ENCODE measurements at regions of chr6 and their contacts with region 1.

Region 1: DNA sequence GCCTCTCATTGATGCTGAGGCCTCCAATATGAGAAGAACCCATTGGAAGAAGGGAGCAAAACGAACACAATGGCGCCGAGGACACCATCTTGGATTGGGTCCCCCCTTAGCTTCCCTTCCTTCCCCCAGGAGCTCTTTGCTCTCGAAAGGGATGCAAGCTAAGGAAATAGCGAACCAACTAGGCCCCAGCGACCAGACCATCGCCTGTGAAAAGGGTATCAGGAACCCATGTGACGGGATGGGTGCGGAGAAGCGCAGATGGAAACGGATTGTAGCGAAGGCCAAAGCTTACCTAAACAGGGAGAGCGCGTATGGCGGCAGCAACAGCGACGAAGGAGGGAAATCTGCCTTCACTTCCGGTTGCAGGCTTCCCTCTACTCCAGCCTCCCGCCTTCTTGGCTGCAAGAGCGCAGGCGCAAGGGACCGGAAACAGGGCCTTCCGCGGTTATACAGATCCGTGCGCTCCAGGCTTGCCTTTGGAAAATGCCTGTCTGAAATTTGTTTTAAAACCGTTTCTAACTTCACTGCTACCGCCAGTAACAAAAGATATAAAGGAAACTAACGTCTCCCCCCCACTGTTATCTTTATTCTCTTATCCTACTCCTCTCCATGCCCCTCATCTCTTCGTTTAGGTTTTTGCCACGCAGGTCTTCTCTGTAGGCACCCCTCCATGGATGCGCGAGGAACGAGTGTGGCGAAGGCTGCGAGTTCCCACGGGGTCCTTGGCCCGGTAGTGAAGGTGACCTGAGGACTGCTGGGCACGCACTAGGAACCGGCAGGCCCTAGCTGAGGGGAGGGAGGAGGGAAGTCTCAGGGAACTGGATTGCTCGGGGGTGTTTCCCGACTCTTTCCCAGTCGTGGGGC is at the start of gene DDX39B:
- DNase-seq: peak; percentile 95

Region 2: DNA sequence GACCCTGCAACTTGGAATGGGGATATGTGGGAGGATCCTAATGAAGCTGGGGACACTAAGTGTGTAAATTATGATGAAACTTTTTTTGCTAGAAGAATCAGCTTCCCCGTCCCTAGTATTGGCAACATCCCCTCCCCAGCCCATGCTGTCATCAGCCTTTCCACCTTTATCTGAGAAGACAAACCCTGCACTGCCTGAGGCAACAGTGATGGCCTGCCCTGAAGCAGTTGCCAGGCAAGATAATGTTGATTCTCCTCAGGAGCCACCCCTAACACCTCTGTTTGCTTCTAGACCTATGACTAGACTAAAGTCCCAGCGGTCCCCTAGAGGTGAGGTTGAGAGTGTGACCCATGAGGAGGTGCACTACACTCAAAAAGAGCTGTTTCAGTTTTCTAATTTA is 111.4 kb before region 1 on chr6:
- CTCF ChIA-PET with region 1: no interaction called
- POLR2A ChIA-PET with region 1: no interaction called
- DNase-seq: no peak

Region 3: DNA sequence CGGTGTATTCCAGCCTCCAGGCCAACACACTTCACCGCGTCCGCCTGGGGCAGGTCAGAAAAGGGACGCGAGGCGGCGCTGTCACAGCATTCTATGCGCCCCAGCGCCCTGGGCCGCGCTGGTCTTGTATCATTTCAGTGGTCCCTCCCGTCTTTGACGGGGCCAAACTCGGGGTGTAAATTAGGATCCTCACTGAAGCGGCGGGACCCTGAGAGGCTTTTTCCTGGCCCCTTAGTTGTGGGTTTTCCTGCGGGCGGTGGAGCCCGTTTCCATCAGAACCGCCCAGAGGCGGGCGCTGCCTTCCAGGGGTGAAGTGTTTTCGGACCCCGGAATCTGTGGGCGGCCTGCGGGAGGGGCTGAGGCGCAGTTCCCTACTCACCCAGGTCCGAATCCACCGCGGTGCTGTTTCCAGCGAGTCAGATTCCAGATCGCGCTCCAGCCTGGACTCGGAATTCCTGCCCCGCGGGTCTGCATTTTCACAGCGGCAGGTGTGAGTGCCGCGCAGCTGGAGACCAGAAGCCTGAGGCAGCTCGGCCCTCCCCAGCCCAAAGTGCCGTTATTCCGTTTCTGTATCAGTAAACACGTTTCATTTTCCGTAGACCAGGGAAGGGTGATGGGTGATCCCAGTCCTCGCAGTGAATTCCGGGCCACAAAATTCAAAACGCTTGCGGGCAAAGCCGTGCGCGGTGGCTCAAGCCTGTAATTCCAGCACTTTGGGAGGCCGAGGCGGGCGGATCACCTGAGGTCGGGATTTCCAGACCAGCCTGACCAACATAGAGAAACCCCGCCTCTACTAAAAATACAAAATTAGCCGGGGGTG is 47.8 kb before region 1 on chr6:
- CTCF ChIA-PET with region 1: interaction called, 6 read pairs
- POLR2A ChIA-PET with region 1: interaction called, 74 read pairs
- DNase-seq: peak; percentile 72

Region 4: DNA sequence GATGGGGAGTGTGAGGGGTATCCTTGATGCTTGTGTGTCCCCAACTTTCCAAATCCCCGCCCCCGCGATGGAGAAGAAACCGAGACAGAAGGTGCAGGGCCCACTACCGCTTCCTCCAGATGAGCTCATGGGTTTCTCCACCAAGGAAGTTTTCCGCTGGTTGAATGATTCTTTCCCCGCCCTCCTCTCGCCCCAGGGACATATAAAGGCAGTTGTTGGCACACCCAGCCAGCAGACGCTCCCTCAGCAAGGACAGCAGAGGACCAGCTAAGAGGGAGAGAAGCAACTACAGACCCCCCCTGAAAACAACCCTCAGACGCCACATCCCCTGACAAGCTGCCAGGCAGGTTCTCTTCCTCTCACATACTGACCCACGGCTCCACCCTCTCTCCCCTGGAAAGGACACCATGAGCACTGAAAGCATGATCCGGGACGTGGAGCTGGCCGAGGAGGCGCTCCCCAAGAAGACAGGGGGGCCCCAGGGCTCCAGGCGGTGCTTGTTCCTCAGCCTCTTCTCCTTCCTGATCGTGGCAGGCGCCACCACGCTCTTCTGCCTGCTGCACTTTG is 33.5 kb after region 1 on chr6 and contains the start of gene TNF:
- CTCF ChIA-PET with region 1: no interaction called
- POLR2A ChIA-PET with region 1: interaction called, 14 read pairs
- DNase-seq: no peak

Region 5: DNA sequence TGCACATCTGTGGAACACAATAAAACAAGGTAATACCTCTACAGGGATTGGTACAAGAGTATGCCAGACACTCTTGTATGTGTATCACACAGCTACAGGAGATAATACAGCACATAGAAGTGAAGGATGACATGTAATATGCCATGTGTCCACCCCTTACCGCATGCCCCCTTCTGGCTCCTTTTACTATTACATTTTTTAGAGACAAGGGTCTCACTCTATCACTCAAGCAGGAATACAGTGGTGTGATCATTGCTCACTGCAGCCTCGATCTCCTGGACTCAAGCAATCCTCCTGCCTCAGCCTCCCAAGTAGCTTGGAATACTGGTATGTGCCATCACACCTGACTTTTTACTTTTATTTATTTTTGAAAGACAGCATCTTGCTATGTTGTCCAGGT is 55.1 kb after region 1 on chr6:
- CTCF ChIA-PET with region 1: interaction called, 61 read pairs
- POLR2A ChIA-PET with region 1: interaction called, 91 read pairs
- DNase-seq: no peak

Region 6: GRCh38 chr6:31652925-31653718 is 111.2 kb after region 1 on chr6:
- CTCF ChIA-PET with region 1: interaction called, 4 read pairs
- POLR2A ChIA-PET with region 1: interaction called, 23 read pairs
- DNase-seq: peak; percentile 88

Region 7: GRCh38 chr6:31665501-31666336 is 123.8 kb after region 1 on chr6 and contains the start of gene CSNK2B:
- CTCF ChIA-PET with region 1: no interaction called
- POLR2A ChIA-PET with region 1: interaction called, 16 read pairs
- DNase-seq: peak; percentile 98